Left ventricle myocardium inferior (tissue), 1 donor: ENCODE measurements at regions of chr1 and their contacts with region 1.

Region 1: DNA sequence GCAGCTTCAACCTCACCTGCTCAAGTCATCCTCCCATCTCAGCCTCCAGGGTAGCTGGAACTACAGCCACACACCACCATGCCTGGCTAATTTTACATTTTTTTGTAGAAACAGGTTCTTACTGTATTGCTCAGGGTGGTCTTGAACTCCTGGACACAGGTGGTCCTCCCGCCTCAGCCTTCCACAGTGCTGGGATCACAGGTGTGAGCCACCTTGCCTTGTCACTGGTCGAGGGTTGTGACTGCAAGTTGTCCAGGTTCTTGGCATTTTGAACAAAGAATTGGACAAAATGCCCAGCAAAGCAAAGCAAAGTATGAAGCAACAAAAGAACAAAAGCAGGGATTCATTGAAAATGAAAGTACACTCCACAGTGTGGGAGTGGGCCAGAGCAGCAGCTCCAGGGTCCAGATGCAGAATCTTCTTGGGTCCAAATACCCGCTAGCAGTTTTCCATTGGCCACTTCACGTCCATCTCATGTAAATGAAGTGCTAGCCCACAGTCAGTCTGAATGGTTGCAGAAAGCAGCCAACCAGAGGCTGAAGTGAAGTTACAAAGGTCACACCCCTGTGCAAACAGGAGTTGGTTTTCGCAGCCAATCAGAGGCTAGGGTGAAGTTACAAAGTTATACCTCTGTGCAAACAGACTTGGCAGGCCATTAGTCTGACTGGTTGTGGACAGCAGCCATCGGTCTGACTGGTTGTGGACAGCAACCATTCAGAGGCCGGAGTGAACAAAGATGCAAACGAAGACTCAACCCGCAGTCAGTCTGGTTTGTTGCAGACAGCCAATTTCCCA is 109.5 kb upstream of the KIF26B start:
- DNase-seq: no peak
- H3K4me3 ChIP-seq: no peak overlapping the region
- H3K27ac ChIP-seq: peak overlapping the region; percentile 59
- H3K4me1 ChIP-seq: peaks cover 47% of the 10 kb centered on the region
- H3K27me3 ChIP-seq: no peaks in the 10 kb centered on the region
- CTCF ChIP-seq: no peak

Region 2: DNA sequence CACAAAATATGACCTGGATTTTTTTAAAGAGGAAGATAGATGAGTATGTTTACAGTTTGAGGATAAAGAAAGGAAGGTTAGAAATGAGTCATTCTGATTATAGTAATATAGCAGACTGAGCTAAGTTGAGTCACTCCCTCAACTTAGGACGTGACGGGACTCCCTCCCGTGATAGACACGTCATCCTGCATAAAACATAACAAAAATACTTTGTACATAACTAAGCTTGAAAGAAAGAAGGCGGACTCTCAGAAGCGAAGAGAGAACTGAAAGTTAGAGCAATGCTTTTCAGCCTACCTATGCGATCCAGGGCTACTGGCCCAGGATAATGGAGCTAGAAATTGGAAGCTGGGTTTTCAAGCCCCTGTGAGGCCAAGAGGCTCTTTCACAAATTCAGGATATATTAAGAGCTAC is 445.3 kb before region 1 on chr1:
- intact Hi-C with region 1: loop called (anchors 10 kb)
- DNase-seq: no peak
- H3K4me3 ChIP-seq: no peak overlapping the region
- H3K27ac ChIP-seq: no peak overlapping the region
- H3K4me1 ChIP-seq: no peaks in the 10 kb centered on the region
- H3K27me3 ChIP-seq: peaks cover 10% of the 10 kb centered on the region
- CTCF ChIP-seq: no peak

Region 3: GRCh38 chr1:244864253-244865027 is 180.8 kb before region 1 on chr1 and contains the start of gene HNRNPU:
- intact Hi-C with region 1: loop called (anchors 10 kb)
- DNase-seq: peak; percentile 98
- H3K4me3 ChIP-seq: peak within 1 kb of the TSS; percentile 99
- H3K27ac ChIP-seq: peak within 1 kb of the TSS; percentile 100
- H3K4me1 ChIP-seq: peaks cover 68% of the 10 kb centered on the region
- H3K27me3 ChIP-seq: no peaks in the 10 kb centered on the region
- CTCF ChIP-seq: peak; percentile 52
- total RNA-seq, gene HNRNPU: 167 TPM